Panc1 (cell line): ENCODE measurements at regions of chr19 and their contacts with region 1.

Region 1: GRCh38 chr19:27986299-27986698 is 1226.7 kb downstream of the UQCRFS1 start:
- DNase-seq: no peak
- ATAC-seq: no peak
- H3K4me3 ChIP-seq: no peak overlapping the region
- H3K27ac ChIP-seq: no peak overlapping the region
- H3K4me1 ChIP-seq: no peaks in the 10 kb centered on the region
- H3K27me3 ChIP-seq: no peaks in the 10 kb centered on the region
- CTCF ChIP-seq: no peak

Region 2: DNA sequence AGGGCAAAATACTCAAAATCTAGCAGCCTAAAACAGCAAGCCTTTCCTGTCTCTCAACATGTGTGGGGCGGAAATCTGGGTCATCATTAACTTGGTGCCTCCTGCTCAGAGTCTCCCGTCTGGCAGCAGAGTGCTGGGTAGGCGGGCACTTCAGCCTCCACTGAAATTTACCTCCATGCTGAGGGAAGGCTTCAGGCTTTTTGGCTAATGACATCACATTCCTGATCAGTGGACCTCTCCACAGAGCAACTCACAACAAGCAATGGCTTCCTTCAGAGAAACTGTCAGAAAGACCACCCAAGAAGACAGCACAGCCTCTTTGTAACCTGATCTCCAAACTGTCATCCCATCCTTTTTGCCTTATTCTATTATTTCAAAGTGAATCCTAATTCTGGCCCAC is 117.6 kb after region 1 on chr19:
- CTCF ChIA-PET with region 1: interaction called, 11 read pairs
- POLR2A ChIA-PET with region 1: no interaction called
- in situ Hi-C with region 1: no loop called
- intact Hi-C with region 1: no loop called
- DNase-seq: no peak
- ATAC-seq: no peak
- H3K4me3 ChIP-seq: no peak overlapping the region
- H3K27ac ChIP-seq: no peak overlapping the region
- H3K4me1 ChIP-seq: no peaks in the 10 kb centered on the region
- H3K27me3 ChIP-seq: no peaks in the 10 kb centered on the region
- CTCF ChIP-seq: no peak

Region 3: DNA sequence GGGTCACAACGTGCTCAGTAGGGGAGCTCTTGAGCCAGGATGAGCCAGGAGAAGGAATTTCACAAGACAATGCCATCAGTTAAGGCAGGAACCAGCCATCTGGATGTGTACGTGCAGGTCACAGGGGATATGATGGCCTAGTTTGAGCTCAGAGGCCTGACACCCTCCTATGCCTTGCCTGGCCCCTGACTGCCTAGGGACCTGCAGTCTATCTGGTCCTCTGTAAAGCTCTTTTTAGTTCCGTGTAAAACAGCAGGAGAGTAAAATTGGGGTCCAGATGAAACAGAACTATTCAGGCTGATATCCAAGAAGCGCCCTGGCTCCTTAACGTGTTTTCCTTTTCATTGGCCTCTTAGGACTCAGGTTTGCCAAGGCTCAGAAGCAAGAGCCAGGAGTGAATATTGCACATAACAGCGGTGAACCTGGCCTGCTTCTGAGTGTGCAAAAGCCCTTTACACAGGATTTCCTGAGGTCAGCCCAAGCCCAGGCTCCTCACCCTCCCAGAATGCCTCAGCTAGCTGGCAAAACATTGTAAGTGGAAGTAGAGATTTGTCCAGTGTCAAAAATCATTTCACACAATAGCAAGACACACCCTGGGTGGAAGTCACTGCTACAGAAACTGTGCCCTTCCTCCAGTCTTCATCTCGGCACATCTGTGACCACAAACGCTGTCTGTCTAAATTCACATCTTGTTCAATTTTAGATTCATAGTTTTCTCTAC is 449.4 kb after region 1 on chr19:
- CTCF ChIA-PET with region 1: no interaction called
- POLR2A ChIA-PET with region 1: no interaction called
- in situ Hi-C with region 1: no loop called
- intact Hi-C with region 1: no loop called
- DNase-seq: no peak
- ATAC-seq: no peak
- H3K4me3 ChIP-seq: no peak overlapping the region
- H3K27ac ChIP-seq: no peak overlapping the region
- H3K4me1 ChIP-seq: no peaks in the 10 kb centered on the region
- H3K27me3 ChIP-seq: no peaks in the 10 kb centered on the region; the same call in 1 of the 2 replicates
- CTCF ChIP-seq: no peak